ENCODE measurements at regions of chr12 and their contacts with region 1.

Region 1: DNA sequence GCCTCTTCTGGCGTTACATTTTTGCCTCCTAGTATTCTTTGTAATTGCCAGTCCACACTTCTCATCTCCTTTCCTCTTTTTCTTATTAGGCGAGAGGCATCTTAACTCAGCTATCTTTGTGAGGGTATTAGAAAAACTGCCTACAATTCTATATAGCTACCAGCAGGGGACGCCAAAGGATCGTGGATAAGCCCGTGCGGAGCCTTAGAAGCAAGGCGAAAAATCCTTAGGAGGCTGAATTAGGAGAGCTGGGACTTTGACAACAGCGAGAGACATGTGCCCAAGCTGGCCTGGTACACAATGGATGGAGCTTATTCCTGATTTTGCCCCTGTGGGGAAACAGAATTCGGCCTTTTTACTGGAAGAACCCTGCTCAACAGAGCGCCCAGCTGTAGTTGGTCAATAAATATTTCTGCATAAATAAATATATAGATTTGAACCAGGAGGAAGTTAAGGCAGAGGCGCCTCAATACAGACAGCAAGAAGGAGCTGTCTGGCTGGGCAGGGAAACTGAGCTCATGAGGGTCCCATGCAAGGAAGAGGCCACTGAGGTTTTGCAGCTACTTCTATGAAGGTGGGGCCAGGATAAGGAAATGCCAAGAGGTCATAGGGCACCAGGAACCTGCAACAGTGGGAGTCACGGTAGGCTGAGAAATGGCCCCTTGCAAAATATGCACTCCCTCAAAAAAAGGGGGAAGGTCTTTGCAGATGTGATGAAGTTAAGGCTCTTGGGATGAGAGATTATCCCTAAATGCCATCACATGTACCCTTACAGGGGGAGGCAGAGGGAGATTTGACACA is 14.6 kb upstream of the RBM19 start:
- DNase-seq: peak; percentile 61
- ATAC-seq: peak; percentile 89
- H3K4me3 ChIP-seq: no peak overlapping the region
- H3K27ac ChIP-seq: no peak overlapping the region
- H3K4me1 ChIP-seq: no peaks in the 10 kb centered on the region
- H3K27me3 ChIP-seq: peaks cover 45% of the 10 kb centered on the region
- CTCF ChIP-seq: peak; percentile 87 to 99 (median 89)
- POLR2A ChIP-seq: no peak
- RAD21 ChIP-seq: peak; percentile 97

Region 2: DNA sequence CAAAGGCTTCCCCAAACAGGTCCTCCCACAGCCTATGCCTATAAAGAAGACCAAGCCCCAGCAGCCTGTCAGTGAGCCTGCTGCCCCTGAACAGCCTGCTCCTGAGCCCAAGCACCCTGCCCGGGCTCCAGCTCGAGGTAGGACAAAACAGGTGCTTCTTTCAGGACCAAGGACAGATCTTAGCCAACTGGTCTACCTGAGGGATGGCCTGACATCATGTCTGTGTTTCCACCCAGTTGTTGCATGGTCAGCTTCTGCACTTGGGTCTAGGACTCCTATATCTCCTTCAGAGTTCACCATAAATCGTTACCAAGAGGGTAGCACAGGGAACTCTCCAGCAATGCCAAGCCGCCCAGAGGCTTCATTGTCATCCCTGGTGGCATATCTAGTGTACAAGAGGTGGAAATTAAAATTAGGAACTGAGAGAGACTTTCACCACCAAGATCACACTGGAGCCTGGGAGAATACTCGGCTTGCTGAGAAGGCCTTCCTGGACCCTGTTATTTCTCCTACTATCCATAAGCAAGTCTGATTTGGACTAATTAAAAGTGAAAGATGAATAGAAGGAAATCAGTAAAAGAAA is 1112.2 kb before region 1 on chr12:
- CTCF ChIA-PET with region 1: no interaction called
- POLR2A ChIA-PET with region 1: no interaction called
- RAD21 ChIA-PET with region 1: no interaction called
- intact Hi-C with region 1: no loop called
- DNase-seq: no peak
- ATAC-seq: no peak
- H3K4me3 ChIP-seq: no peak overlapping the region
- H3K27ac ChIP-seq: no peak overlapping the region
- H3K4me1 ChIP-seq: no peaks in the 10 kb centered on the region
- H3K27me3 ChIP-seq: peaks cover 85% of the 10 kb centered on the region
- CTCF ChIP-seq: no peak
- POLR2A ChIP-seq: no peak
- RAD21 ChIP-seq: no peak

Region 3: GRCh38 chr12:113689047-113689610 is 291.6 kb before region 1 on chr12:
- CTCF ChIA-PET with region 1: no interaction called
- POLR2A ChIA-PET with region 1: no interaction called
- RAD21 ChIA-PET with region 1: no interaction called
- intact Hi-C with region 1: no loop called
- DNase-seq: no peak
- ATAC-seq: no peak
- H3K4me3 ChIP-seq: no peak overlapping the region
- H3K27ac ChIP-seq: no peak overlapping the region
- H3K4me1 ChIP-seq: no peaks in the 10 kb centered on the region
- H3K27me3 ChIP-seq: no peaks in the 10 kb centered on the region
- CTCF ChIP-seq: no peak
- POLR2A ChIP-seq: no peak
- RAD21 ChIP-seq: no peak

Region 4: GRCh38 chr12:113965951-113966797 is 14.6 kb before region 1 on chr12 and contains the start of gene RBM19:
- CTCF ChIA-PET with region 1: interaction called, 17 read pairs
- POLR2A ChIA-PET with region 1: no interaction called
- RAD21 ChIA-PET with region 1: interaction called in 1 of 2 experiments, 3 read pairs
- intact Hi-C with region 1: no loop called
- DNase-seq: peak; percentile 96
- ATAC-seq: peak; percentile 99
- H3K4me3 ChIP-seq: peak within 1 kb of the TSS; percentile 91 to 98
- H3K27ac ChIP-seq: peak within 1 kb of the TSS; percentile 23; the same call in 1 of the 2 replicates
- H3K4me1 ChIP-seq: peaks cover 6 to 15% of the 10 kb centered on the region in 2 experiments; a peak in 3 of 4 replicates
- H3K27me3 ChIP-seq: no peaks in the 10 kb centered on the region
- CTCF ChIP-seq: peak; percentile 60 to 81 (median 81); a peak in 5 of 6 replicates
- POLR2A ChIP-seq: peak; percentile 43
- RAD21 ChIP-seq: peak; percentile 58
- total RNA-seq, gene RBM19: 30.7 TPM

Region 5: DNA sequence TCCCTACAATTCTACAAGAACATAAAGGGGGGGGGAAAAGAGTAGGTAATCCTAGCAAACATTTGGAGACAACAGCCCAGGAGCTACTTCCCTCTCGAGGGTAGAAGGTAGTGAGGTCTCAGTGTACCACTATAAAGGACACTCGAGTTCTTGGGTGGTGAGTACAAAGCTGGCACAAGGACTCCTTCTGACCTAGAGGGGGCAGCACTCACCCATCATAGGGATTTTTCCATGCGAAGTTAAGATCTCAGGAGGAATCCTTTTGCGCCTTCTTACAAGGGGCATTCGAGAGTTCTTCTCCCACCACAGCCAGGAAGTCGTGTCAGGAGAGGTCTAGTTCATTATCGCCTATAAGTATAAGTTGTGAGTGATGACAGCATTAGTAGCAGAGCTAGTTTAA is 185.6 kb after region 1 on chr12:
- CTCF ChIA-PET with region 1: interaction called, 5 read pairs
- POLR2A ChIA-PET with region 1: no interaction called
- RAD21 ChIA-PET with region 1: no interaction called
- intact Hi-C with region 1: loop called (anchors 1 kb)
- DNase-seq: peak; percentile 24
- ATAC-seq: peak; percentile 76
- H3K4me3 ChIP-seq: no peak overlapping the region
- H3K27ac ChIP-seq: no peak overlapping the region
- H3K4me1 ChIP-seq: peaks cover 0 to 14% of the 10 kb centered on the region in 2 experiments; a peak in 2 of 4 replicates
- H3K27me3 ChIP-seq: peaks cover 33% of the 10 kb centered on the region
- CTCF ChIP-seq: peak; percentile 44 to 78 (median 72); a peak in 5 of 6 replicates
- POLR2A ChIP-seq: no peak
- RAD21 ChIP-seq: peak; percentile 74

Region 6: GRCh38 chr12:114508529-114509129 is 527.9 kb after region 1 on chr12:
- CTCF ChIA-PET with region 1: interaction called, 43 read pairs
- POLR2A ChIA-PET with region 1: interaction called, 3 read pairs
- RAD21 ChIA-PET with region 1: interaction called, 3 to 9 read pairs
- intact Hi-C with region 1: loop called (anchors 1 kb)
- DNase-seq: peak; percentile 62
- ATAC-seq: peak; percentile 90
- H3K4me3 ChIP-seq: no peak overlapping the region
- H3K27ac ChIP-seq: no peak overlapping the region
- H3K4me1 ChIP-seq: no peaks in the 10 kb centered on the region
- H3K27me3 ChIP-seq: peaks cover 49% of the 10 kb centered on the region
- CTCF ChIP-seq: peak; percentile 62 to 90 (median 72); a peak in 5 of 6 replicates
- POLR2A ChIP-seq: no peak
- RAD21 ChIP-seq: peak; percentile 81

Region 7: DNA sequence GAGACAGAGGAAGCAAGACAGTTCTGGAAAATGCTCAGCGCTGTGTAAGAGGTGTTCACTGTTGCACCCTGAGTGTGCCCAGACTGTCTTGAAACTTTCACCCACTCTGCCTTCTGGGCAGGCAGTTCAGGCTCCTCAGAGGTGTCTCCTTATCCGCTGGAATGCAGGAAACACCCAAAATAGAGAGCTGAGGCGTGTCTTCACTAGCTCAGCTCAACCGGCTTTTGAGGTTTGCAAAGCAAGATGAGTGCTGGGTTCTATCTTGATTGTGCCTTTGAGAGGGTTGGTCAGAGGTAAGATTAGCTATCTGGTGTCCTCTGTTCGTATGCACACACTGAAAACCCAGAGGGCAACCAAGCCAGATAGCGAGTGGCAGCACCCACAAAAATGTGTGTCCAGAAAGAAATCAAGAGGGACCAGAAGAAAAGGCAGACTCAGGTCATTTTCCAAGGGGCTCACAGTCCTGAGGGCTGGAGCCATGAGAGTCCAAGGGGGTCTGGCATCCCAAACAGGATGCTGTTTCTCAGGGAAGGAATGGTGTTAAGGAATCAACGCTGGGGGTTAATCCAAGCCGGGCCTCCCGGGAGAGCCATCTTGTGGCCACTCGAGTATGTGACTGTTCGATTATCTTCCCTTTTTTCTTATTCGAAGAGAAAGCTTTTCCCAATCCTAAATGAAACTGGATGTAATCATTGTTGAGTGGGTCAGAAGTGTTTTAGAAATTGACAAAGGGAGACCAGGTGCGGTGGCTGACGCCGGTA is 656.2 kb after region 1 on chr12:
- CTCF ChIA-PET with region 1: interaction called, 31 read pairs
- POLR2A ChIA-PET with region 1: no interaction called
- RAD21 ChIA-PET with region 1: no interaction called
- intact Hi-C with region 1: loop called (anchors 2 kb)
- DNase-seq: no peak
- ATAC-seq: peak; percentile 73
- H3K4me3 ChIP-seq: peak overlapping the region in 1 of 2 experiments; percentile 2; a peak in 1 of 4 replicates
- H3K27ac ChIP-seq: peak overlapping the region; percentile 19
- H3K4me1 ChIP-seq: peaks cover 7 to 19% of the 10 kb centered on the region in 2 experiments
- H3K27me3 ChIP-seq: no peaks in the 10 kb centered on the region
- CTCF ChIP-seq: peak; percentile 46 to 61 (median 59); a peak in 5 of 6 replicates
- POLR2A ChIP-seq: no peak
- RAD21 ChIP-seq: peak; percentile 48

Region 8: GRCh38 chr12:114662512-114663177 is 681.9 kb after region 1 on chr12:
- CTCF ChIA-PET with region 1: interaction called, 10 read pairs
- POLR2A ChIA-PET with region 1: no interaction called
- RAD21 ChIA-PET with region 1: no interaction called
- intact Hi-C with region 1: loop called (anchors 1 kb)
- DNase-seq: peak; percentile 57
- ATAC-seq: peak; percentile 77
- H3K4me3 ChIP-seq: no peak overlapping the region
- H3K27ac ChIP-seq: no peak overlapping the region
- H3K4me1 ChIP-seq: peaks cover under 1 to 11% of the 10 kb centered on the region in 2 experiments; a peak in 3 of 4 replicates
- H3K27me3 ChIP-seq: no peaks in the 10 kb centered on the region
- CTCF ChIP-seq: peak; percentile 80 to 95 (median 81)
- POLR2A ChIP-seq: no peak
- RAD21 ChIP-seq: peak; percentile 95

Region 9: DNA sequence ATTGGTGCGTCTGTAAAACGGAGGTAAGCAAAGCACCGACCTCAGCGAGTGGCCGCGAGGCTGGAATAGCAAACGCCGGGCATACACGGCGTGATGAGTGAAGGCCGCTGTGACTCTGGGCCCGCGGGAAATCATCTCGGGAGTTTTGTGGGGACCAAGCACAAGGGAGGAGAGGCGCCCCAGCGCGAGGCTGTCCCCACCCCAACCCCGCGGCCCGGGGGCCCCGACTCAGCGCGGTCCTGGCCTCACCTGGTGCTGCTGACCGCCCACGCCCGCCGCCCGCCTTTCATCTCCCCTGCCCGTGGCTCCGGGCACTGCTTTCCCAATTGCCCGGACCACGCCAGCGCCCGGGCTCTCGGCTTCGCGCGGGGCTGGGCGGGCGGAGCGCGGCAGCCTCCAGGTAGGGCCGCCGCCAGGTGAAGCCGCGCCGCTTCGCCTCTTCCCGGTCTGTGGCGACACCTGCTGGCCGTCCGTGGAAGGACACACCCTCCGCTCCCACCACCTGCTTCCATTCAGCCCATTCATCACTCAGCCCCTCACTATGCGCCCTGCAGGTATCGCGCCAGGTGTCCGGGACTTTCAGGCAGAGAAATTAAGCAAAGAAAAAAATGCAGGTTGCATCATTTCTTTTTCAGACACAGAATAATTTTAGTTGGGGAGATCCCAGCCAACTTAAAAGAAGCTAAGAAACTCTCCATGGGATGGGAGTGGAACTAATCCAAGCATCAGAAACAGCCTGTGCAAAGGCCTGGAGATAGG is 1936.4 kb after region 1 on chr12:
- CTCF ChIA-PET with region 1: no interaction called
- POLR2A ChIA-PET with region 1: no interaction called
- RAD21 ChIA-PET with region 1: no interaction called
- intact Hi-C with region 1: loop called (anchors 1 kb)
- DNase-seq: peak; percentile 31
- ATAC-seq: peak; percentile 99
- H3K4me3 ChIP-seq: no peak overlapping the region
- H3K27ac ChIP-seq: no peak overlapping the region
- H3K4me1 ChIP-seq: peaks cover 0 to 8% of the 10 kb centered on the region in 2 experiments; a peak in 1 of 4 replicates
- H3K27me3 ChIP-seq: no peaks in the 10 kb centered on the region
- CTCF ChIP-seq: peak; percentile 84 to 86 (median 85)
- POLR2A ChIP-seq: no peak
- RAD21 ChIP-seq: peak; percentile 98

Measured in HCT116 (cell line).